ENCODE measurements at regions of chr6 and their contacts with region 1.

Region 1: DNA sequence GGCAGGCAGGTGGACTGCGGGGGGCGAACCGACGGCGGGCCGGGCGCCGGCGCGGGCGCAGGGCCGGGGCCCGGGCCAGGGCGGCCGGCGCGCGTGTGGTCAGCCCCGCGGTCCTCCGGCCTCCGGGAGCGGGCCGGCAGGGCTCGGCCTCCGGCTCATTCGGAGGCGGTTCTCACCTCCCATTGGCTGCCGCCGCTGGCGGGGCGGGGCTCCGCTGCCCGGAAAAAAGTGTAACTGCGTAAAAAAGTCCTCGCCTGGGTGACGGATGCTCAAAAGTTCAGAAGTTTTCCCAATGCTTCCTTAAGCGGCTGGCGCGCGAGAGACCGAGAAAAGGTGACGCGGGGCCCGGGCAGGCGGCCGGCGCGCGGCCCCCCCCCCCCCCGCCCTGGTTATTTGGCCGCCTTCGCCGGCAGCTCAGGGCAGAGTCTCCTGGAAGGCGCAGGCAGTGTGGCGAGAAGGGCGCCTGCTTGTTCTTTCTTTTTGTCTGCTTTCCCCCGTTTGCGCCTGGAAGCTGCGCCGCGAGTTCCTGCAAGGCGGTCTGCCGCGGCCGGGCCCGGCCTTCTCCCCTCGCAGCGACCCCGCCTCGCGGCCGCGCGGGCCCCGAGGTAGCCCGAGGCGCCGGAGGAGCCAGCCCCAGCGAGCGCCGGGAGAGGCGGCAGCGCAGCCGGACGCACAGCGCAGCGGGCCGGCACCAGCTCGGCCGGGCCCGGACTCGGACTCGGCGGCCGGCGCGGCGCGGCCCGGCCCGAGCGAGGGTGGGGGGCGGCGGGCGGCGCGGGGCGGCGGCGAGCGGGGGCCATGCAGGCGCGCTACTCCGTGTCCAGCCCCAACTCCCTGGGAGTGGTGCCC is at the start of gene FOXC1:
- DNase-seq: peak; percentile 92
- ATAC-seq: peak; percentile 86 to 87
- total RNA-seq, gene FOXC1: 5.5 to 25.9 TPM

Region 2: DNA sequence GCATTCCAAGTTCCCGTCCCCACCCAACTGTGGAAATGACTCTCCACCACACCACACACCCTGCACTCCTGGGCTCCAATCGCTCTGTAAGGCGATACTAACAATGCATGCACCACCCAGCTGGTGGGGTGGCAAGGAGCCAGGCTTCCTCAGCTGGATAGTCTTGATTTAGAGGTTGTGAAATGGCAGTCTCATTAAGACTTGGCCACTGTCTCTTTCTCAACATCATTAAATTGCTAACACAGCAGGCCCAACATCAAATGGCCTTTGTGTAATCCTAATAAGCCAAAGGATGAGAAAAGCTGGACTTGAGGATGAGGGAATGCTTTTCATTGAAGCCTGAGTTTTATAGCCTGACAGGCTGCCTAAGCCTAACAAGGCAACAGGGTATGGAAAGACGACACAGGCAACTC is 411.8 kb after region 1 on chr6:
- intact Hi-C with region 1: loop called in 1 of 2 experiments (anchors 5 kb)
- DNase-seq: peak; percentile 81
- ATAC-seq: peak in 1 of 2 donors; percentile 87

Region 3: DNA sequence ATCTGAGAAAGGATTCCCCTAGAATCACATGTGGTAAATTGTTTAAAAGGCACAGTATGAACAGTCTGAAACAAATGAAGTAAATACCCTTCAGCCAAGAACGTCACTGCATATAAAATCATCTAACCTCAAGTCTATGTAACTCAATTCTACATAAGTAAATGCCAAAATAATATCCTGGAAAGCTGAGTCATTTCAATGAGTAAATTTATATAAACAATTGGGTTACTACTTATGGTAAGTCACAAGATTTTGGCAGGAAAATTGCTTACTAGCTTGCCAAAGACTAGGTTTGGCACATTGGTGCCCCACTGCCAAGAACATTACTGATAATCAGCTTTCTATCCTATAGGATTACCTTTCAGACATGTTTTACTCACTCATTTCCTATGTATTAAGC is 627.1 kb after region 1 on chr6:
- intact Hi-C with region 1: no loop called
- DNase-seq: no peak
- ATAC-seq: no peak

Region 4: GRCh38 chr6:2448820-2449571 is 839.1 kb after region 1 on chr6:
- intact Hi-C with region 1: loop called (anchors 2 to 10 kb)
- DNase-seq: no peak
- ATAC-seq: peak; percentile 52 to 77

Region 5: GRCh38 chr6:2695454-2696095 is 1085.7 kb after region 1 on chr6:
- intact Hi-C with region 1: loop called in 1 of 2 experiments (anchors 5 kb)
- DNase-seq: no peak
- ATAC-seq: peak in 1 of 2 donors; percentile 54